Heart right ventricle (tissue), 16 donors: ENCODE measurements at regions of chr2 and their contacts with region 1.

Region 1: DNA sequence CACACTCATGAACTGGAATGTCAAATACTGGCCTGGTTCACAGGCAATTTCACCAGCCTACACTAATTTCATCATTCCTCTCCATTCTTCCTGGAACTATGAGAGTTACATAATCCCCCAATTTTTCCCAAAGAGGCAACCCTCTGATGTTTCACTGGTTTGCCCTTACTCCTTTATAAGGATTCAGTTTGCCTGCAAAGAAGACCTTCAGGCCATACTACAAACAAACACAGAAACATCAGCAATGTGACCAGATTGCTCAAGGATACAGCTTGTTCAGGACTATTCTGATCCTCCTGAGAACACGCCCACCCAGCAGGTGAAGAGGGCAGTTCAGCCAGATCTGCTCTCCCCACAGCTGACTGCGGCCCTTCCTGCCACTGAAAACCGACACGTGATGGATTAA is 215.4 kb downstream of the ETAA1 start:
- DNase-seq: no peak
- ATAC-seq: peak in 1 of 8 donors; percentile 53
- H3K4me3 ChIP-seq: no peak overlapping the region
- H3K27ac ChIP-seq: no peak overlapping the region
- H3K4me1 ChIP-seq: peaks cover 0 to 6% (median 0%) of the 10 kb centered on the region in 9 donors
- H3K27me3 ChIP-seq: no peaks in the 10 kb centered on the region
- CTCF ChIP-seq: no peak

Region 2: GRCh38 chr2:67579216-67579615 is 33.4 kb before region 1 on chr2:
- intact Hi-C with region 1: loop called in 1 of 10 experiments (anchors 5 kb)
- DNase-seq: no peak
- ATAC-seq: no peak
- H3K4me3 ChIP-seq: no peak overlapping the region
- H3K27ac ChIP-seq: peak overlapping the region in 1 of 10 donors; percentile 67
- H3K4me1 ChIP-seq: no peaks in the 10 kb centered on the region
- H3K27me3 ChIP-seq: no peaks in the 10 kb centered on the region
- CTCF ChIP-seq: no peak